ENCODE measurements at regions of chr10 and their contacts with region 1.

Region 1: GRCh38 chr10:79127151-79127961 is 58.6 kb downstream of the ZMIZ1 start:
- DNase-seq: peak in 1 of 2 experiments; percentile 36
- H3K4me3 ChIP-seq: no peak overlapping the region
- H3K27ac ChIP-seq: no peak overlapping the region; the same call in 1 of the 2 replicates
- H3K4me1 ChIP-seq: peaks cover 26 to 66% (median 41%) of the 10 kb centered on the region in 4 experiments
- H3K27me3 ChIP-seq: no peaks in the 10 kb centered on the region
- CTCF ChIP-seq: no peak
- EP300 ChIP-seq: no peak
- POLR2A ChIP-seq: no peak
- RAD21 ChIP-seq: peak in 1 of 2 experiments; percentile 18; a peak in 1 of 4 replicates

Region 2: DNA sequence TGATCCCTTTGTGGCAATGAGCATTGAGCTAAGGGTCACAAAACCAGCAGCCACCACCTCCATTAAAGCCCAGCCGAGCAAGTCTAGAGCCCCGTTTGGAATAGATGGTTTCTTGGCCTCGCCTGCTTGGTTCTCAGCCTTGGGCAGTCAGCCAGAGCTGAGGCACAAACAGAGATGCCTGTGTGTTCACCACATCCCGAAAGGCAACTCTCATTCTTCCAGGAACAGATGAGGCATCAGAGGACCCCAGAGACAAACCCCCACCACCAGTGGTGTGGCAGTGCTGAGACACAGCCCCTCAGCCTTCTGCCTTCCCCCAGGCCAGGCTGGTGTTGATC is 261.8 kb before region 1 on chr10:
- CTCF ChIA-PET with region 1: no interaction called
- POLR2A ChIA-PET with region 1: no interaction called
- DNase-seq: no peak
- H3K4me3 ChIP-seq: no peak overlapping the region
- H3K27ac ChIP-seq: no peak overlapping the region
- H3K4me1 ChIP-seq: no peaks in the 10 kb centered on the region
- H3K27me3 ChIP-seq: peaks cover 0 to 3% (median 0%) of the 10 kb centered on the region in 4 experiments; a peak in 1 of 7 replicates
- CTCF ChIP-seq: no peak
- EP300 ChIP-seq: no peak
- POLR2A ChIP-seq: no peak
- RAD21 ChIP-seq: no peak

Region 3: GRCh38 chr10:78899996-78900714 is 227.2 kb before region 1 on chr10:
- CTCF ChIA-PET with region 1: no interaction called
- POLR2A ChIA-PET with region 1: no interaction called
- DNase-seq: peak in 1 of 2 experiments; percentile 45
- H3K4me3 ChIP-seq: no peak overlapping the region
- H3K27ac ChIP-seq: no peak overlapping the region
- H3K4me1 ChIP-seq: peaks cover 0 to 9% (median 4%) of the 10 kb centered on the region in 4 experiments; a peak in 5 of 7 replicates
- H3K27me3 ChIP-seq: no peaks in the 10 kb centered on the region; a peak in 1 of 7 replicates
- CTCF ChIP-seq: no peak
- EP300 ChIP-seq: no peak
- POLR2A ChIP-seq: no peak
- RAD21 ChIP-seq: no peak

Region 4: DNA sequence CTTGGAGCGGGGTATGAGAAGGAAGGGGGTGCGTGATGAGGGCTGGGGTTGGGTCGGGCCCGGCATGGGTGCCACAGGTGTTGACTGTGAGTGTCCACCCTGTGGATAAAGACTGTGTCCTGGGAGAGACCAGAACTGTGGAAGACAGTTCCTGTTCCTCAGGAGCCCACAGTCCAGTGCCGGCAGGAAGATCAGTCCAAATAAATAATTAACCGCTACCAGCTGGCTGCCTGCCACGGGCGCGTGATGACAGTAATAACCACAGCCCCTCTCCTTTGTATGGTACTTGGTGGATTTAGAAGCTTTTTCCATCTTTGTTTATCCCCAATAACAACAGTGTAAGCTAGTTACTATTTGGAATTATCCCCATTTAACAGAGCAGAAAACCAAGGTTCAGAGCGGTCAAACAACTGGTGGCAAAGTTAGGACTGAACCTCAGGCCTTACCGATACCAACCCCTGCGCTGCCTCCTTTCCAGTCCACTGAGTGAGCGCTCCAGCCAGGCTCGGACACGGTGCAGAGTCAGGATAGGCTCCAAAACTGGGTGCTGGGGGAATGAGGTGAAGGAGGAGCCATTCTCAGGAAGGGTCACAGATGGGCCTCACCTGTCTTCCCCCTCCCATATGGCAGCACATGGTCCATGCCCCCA is 53.4 kb before region 1 on chr10:
- CTCF ChIA-PET with region 1: interaction called, 10 read pairs
- POLR2A ChIA-PET with region 1: interaction called, 4 read pairs
- DNase-seq: no peak
- H3K4me3 ChIP-seq: no peak overlapping the region
- H3K27ac ChIP-seq: no peak overlapping the region
- H3K4me1 ChIP-seq: peaks cover 10 to 40% (median 25%) of the 10 kb centered on the region in 4 experiments
- H3K27me3 ChIP-seq: no peaks in the 10 kb centered on the region; a peak in 1 of 7 replicates
- CTCF ChIP-seq: no peak
- EP300 ChIP-seq: no peak
- POLR2A ChIP-seq: no peak
- RAD21 ChIP-seq: no peak

Region 5: GRCh38 chr10:79101560-79102497 is 25.5 kb before region 1 on chr10:
- CTCF ChIA-PET with region 1: interaction called, 14 read pairs
- POLR2A ChIA-PET with region 1: no interaction called
- DNase-seq: no peak
- H3K4me3 ChIP-seq: no peak overlapping the region
- H3K27ac ChIP-seq: no peak overlapping the region
- H3K4me1 ChIP-seq: peaks cover 10 to 41% (median 21%) of the 10 kb centered on the region in 4 experiments
- H3K27me3 ChIP-seq: no peaks in the 10 kb centered on the region
- CTCF ChIP-seq: no peak
- EP300 ChIP-seq: no peak
- POLR2A ChIP-seq: no peak
- RAD21 ChIP-seq: no peak

Region 6: DNA sequence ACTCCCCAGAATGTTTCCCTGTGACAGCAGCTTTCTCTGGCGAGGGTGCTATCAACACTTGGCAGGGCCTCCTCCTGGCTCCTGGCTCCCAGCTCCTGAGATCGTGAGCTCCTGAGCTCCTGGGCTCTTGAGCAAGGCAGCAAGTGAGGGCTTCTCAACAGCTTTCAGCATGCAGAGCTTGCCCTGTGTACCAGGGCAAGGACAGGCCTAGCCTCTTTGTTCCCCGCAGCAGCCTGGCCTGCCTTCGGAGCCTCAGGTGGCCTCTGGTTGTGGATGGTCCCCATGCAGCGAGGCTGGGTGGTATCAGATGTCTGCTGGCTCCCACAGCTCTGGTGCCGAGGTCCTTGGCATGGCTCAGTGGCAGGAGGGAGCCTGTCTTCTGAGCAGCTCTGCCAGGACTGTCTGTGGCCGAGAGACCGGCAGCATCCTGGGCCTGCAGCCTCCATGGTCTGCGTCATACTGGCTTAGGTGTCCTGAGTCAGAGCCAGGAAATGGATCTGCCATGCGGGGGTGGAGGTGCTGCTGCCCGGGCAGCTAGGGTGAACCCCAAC is 14.4 kb before region 1 on chr10:
- CTCF ChIA-PET with region 1: interaction called, 12 read pairs
- POLR2A ChIA-PET with region 1: interaction called, 16 read pairs
- DNase-seq: no peak
- H3K4me3 ChIP-seq: no peak overlapping the region
- H3K27ac ChIP-seq: peak overlapping the region; percentile 35; the same call in 1 of the 2 replicates
- H3K4me1 ChIP-seq: peaks cover 6 to 37% (median 23%) of the 10 kb centered on the region in 4 experiments
- H3K27me3 ChIP-seq: no peaks in the 10 kb centered on the region
- CTCF ChIP-seq: no peak
- EP300 ChIP-seq: no peak
- POLR2A ChIP-seq: no peak
- RAD21 ChIP-seq: no peak

Region 7: DNA sequence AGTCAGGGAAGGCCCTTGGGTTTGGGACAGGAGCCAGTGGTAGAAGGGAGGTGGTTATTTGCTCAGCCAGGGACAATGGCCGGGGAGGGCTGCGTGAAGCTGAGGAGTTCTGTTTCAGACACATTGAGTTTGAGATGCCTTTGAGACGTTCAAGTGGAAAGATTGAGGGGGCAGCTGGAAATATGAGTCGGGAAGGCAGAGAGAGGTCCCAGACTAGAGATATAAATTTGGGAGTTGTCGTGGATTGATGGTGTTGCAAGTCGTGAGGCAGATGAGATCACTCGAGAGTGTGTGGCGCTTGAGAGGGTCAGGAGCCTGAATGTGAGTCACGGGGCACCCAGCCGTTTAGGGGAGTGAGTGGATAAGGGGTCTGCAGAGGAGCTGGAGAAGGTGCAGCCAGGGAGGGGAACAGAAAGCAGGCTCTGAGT is 14.7 kb after region 1 on chr10:
- CTCF ChIA-PET with region 1: interaction called, 12 read pairs
- POLR2A ChIA-PET with region 1: interaction called, 9 read pairs
- DNase-seq: no peak
- H3K4me3 ChIP-seq: no peak overlapping the region
- H3K27ac ChIP-seq: no peak overlapping the region
- H3K4me1 ChIP-seq: peaks cover 0 to 39% (median 19%) of the 10 kb centered on the region in 4 experiments; a peak in 6 of 7 replicates
- H3K27me3 ChIP-seq: no peaks in the 10 kb centered on the region
- CTCF ChIP-seq: no peak
- EP300 ChIP-seq: no peak
- POLR2A ChIP-seq: no peak
- RAD21 ChIP-seq: no peak

Region 8: GRCh38 chr10:79155301-79156081 is 28.1 kb after region 1 on chr10:
- CTCF ChIA-PET with region 1: interaction called, 26 read pairs
- POLR2A ChIA-PET with region 1: interaction called, 5 read pairs
- DNase-seq: no peak
- H3K4me3 ChIP-seq: no peak overlapping the region
- H3K27ac ChIP-seq: no peak overlapping the region
- H3K4me1 ChIP-seq: peaks cover 21 to 51% (median 39%) of the 10 kb centered on the region in 4 experiments
- H3K27me3 ChIP-seq: no peaks in the 10 kb centered on the region
- CTCF ChIP-seq: peak in 2 of 3 experiments; percentile 1 to 7; a peak in 1 of 4 replicates
- EP300 ChIP-seq: no peak
- POLR2A ChIP-seq: no peak
- RAD21 ChIP-seq: peak in 1 of 2 experiments; percentile 12; a peak in 1 of 4 replicates

Region 9: GRCh38 chr10:79162861-79163665 is 35.7 kb after region 1 on chr10:
- CTCF ChIA-PET with region 1: interaction called, 26 read pairs
- POLR2A ChIA-PET with region 1: interaction called, 3 read pairs
- DNase-seq: no peak
- H3K4me3 ChIP-seq: no peak overlapping the region
- H3K27ac ChIP-seq: no peak overlapping the region; the same call in 1 of the 2 replicates
- H3K4me1 ChIP-seq: peaks cover 8 to 39% (median 24%) of the 10 kb centered on the region in 4 experiments
- H3K27me3 ChIP-seq: no peaks in the 10 kb centered on the region; a peak in 1 of 7 replicates
- CTCF ChIP-seq: no peak
- EP300 ChIP-seq: no peak
- POLR2A ChIP-seq: no peak
- RAD21 ChIP-seq: no peak

Measured in H1 (cell line).